HEK293 (cell line): ENCODE measurements at regions of chr14 and their contacts with region 1.

Region 1: DNA sequence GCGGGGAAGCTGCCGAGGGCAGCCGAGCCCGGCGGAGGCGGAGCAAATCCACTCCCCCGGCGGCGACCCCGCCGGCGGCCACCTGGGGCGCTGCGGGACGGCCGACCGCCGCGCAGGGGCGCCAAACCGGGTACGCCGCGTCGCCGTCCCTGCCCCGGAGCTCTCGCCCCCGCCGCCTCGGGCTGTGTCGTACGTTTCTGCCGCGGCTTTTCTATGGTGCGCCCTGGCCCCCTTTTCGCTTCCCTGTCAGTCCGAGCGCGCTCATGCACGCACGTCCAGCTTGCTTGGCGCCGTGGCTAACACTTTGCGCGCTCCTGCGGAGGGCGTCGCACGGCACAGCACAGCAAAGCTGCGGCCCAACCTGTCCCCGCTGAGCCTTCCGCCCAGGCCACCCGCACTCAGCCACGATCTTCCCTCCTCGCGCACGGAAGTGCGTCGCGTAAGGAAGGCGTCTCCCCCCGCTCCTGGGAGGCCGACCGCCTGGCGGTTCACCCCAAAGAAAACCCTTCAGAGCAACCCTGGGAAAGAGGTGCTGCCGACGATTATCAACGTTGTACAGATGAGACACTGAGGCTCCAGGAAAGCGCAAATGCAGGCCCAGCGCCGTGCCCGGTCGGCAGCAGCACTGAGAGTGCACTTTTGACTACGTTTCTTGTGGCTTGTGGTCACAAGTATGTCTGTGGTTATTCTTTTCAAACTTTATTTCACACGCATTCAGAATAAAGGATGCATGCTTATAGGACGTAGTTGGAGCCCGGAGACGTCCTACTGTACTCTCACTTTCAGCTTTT is at the start of gene HECTD1:
- H3K4me3 ChIP-seq: peak within 1 kb of the TSS; percentile 93
- H3K27ac ChIP-seq: peak within 1 kb of the TSS; percentile 100
- H3K4me1 ChIP-seq: 0 out of 2 replicates have a peak, but pooled peaks cover 5% of the 10 kb centered on the region
- CTCF ChIP-seq: peak; percentile 86

Region 2: DNA sequence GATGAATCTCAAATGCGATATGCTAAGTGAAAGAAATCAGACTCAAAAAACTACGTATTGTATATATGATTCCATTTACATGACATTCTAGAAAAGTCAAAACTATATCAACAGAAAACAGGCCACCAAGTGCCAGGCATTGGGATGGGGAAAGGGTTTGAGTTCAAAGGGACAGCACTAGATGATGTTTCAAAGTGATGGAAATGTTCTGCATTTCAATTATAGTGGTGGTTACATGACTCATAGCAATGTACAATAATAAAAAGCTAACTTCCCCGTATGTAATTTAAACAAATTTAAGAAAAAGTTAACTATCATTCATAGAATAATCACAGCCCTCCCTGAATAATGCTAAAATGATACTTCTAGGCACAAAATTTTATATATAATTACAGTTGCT is 13.9 kb before region 1 on chr14:
- CTCF ChIA-PET with region 1: interaction called, 16 read pairs
- POLR2A ChIA-PET with region 1: no interaction called
- H3K4me3 ChIP-seq: no peak overlapping the region
- H3K27ac ChIP-seq: no peak overlapping the region
- H3K4me1 ChIP-seq: no peaks in the 10 kb centered on the region
- CTCF ChIP-seq: no peak